ENCODE measurements at regions of chr4 and their contacts with region 1.

Region 1: DNA sequence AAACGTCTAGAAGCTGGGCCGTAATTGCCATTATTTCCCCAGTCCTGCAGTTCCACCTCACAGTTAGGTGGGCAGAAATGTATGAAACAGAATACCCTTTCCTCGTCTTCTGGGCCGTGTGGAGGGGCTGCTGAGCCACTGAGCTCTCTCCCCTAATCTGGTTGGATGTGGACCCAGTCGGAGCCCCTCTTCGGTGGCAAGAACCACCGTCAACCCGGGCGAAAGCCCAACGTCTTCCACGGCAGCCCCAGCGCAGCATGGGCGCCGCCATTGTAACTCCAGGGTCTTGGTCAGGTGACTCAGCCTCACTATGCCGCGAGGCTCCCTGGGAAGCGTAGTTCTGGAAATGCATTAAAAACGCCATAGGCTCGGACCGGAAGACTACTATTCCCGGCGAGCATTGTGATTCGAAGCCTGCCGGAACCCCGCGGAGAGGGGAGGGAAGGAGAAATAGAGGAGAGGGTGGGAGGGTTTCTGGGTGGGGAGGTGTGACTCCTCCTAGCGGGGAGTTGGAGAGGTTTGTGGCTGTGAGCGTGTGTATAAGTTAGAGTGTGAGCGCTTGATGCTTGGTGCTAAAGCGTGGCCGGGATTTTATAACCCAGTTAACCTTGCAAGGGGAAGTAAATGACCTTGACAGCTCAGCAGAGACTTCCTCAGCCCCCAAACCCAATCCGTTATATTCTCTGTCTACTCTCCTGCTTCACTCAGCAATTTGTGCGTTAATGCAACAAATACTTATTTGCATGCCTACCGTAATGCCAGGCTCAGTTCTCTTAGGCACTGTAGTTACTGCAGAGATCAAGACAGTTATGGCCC is at the start of gene GATB:
- DNase-seq: peak; percentile 75 to 97
- H3K4me3 ChIP-seq: peak within 1 kb of the TSS; percentile 63 to 74
- H3K27ac ChIP-seq: peak within 1 kb of the TSS in 1 of 2 donors; percentile 29
- H3K4me1 ChIP-seq: peaks cover 0 to 4% of the 10 kb centered on the region in 2 donors
- H3K27me3 ChIP-seq: no peaks in the 10 kb centered on the region
- CTCF ChIP-seq: peak in 2 of 3 experiments; percentile 30 to 37
- total RNA-seq, gene GATB: 16.7 TPM

Region 2: DNA sequence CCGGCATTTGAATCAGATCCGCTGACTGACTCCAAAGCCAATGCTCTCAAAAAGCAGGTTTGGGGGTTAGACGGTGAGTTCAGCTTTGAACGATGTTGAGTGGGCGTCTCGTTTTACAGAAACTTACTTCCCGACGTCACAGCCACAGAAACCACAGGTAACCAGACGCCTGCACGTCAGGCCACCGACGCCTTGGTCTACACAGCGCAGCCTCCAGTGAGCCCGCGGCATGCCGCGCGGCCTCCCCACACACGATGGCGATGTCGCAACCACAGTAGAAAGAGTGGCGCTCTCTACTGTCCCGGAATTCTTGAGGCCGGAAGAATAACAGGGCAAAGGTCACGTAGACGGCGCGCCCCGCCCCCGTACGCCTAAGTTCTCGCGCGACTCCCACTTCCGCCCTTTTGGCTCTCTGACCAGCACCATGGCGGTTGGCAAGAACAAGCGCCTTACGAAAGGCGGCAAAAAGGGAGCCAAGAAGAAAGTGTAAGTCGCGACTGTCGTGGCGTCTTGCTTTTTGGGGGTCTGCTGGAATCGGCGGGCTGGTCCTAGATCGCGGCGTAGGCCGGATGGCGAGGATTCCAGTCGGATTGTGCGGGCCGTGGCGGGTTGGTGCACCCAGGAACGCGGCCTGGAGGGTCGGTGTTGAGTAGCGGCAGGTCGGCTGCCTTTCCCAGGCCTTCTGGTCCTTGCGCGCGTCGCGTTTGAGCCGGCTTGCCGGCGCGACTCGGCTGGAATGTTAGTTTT is 661.5 kb before region 1 on chr4 and contains the start of gene RPS3A:
- intact Hi-C with region 1: loop called (anchors 2 kb)
- DNase-seq: peak; percentile 90 to 98
- H3K4me3 ChIP-seq: peak within 1 kb of the TSS; percentile 73
- H3K27ac ChIP-seq: peak within 1 kb of the TSS; percentile 90 to 93
- H3K4me1 ChIP-seq: peaks cover 6 to 18% of the 10 kb centered on the region in 2 donors
- H3K27me3 ChIP-seq: no peaks in the 10 kb centered on the region
- CTCF ChIP-seq: peak; percentile 82 to 87 (median 84)
- total RNA-seq, gene RPS3A: 1,276 TPM

Region 3: GRCh38 chr4:151227731-151228130 is 533.2 kb before region 1 on chr4:
- intact Hi-C with region 1: loop called (anchors 5 kb)
- DNase-seq: peak; percentile 18 to 84
- H3K4me3 ChIP-seq: peak overlapping the region; percentile 44 to 56
- H3K27ac ChIP-seq: peak overlapping the region; percentile 85
- H3K4me1 ChIP-seq: peaks cover 0 to 10% of the 10 kb centered on the region in 2 donors
- H3K27me3 ChIP-seq: no peaks in the 10 kb centered on the region
- CTCF ChIP-seq: no peak

Region 4: GRCh38 chr4:151408630-151409469 is 352.1 kb before region 1 on chr4 and contains the start of gene FHIP1A:
- intact Hi-C with region 1: loop called (anchors 1 kb)
- DNase-seq: peak; percentile 10 to 85
- H3K4me3 ChIP-seq: peak within 1 kb of the TSS; percentile 72 to 78
- H3K27ac ChIP-seq: peak within 1 kb of the TSS; percentile 42 to 43
- H3K4me1 ChIP-seq: peaks cover 0 to 5% of the 10 kb centered on the region in 2 donors
- H3K27me3 ChIP-seq: no peaks in the 10 kb centered on the region
- CTCF ChIP-seq: no peak
- total RNA-seq, gene FHIP1A: not detected

Region 5: GRCh38 chr4:151711646-151712045 is 49.3 kb before region 1 on chr4:
- intact Hi-C with region 1: no loop called
- DNase-seq: no peak
- H3K4me3 ChIP-seq: no peak overlapping the region
- H3K27ac ChIP-seq: no peak overlapping the region
- H3K4me1 ChIP-seq: no peaks in the 10 kb centered on the region
- H3K27me3 ChIP-seq: no peaks in the 10 kb centered on the region
- CTCF ChIP-seq: no peak

Region 6: DNA sequence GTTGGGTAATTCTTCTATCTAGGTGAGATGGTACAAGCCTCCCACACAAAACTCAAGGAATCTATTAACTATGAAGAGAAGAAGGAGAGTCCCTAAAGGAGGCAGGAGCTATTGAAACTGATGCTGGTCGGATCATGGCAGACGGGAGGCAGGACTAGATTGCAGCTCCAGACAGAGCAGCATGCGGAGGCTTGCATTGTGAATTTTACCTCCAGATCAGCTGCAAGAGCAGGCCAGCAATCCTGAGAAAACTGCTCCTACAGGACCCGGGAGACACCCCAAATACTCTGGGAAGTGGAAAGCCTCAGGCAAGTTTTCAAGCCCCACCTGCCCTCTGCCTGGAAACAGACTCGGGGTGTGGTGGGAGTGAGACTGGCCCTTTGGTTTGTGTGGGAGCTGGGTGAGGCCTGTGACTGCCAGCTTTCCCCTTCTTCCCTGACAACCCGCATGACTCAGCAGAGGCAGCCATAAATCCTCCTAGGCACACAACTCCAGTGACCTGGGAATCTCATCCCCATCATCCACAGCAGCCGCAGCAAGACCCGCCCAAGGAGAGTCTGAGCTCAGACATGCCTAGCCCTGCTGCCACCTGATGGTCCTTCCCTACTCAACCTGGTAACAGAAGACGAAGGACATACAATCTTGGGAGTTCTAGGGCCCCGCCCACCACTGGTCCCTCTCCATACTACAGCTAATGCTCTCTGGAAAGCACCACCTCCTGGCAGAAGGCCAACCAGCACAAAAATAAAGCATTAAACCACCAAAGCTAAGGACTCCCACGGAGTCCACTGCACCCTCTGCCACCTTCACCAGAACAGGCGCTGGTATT is 31.0 kb before region 1 on chr4:
- intact Hi-C with region 1: no loop called
- DNase-seq: no peak
- H3K4me3 ChIP-seq: no peak overlapping the region
- H3K27ac ChIP-seq: no peak overlapping the region
- H3K4me1 ChIP-seq: no peaks in the 10 kb centered on the region
- H3K27me3 ChIP-seq: no peaks in the 10 kb centered on the region
- CTCF ChIP-seq: no peak

Region 7: DNA sequence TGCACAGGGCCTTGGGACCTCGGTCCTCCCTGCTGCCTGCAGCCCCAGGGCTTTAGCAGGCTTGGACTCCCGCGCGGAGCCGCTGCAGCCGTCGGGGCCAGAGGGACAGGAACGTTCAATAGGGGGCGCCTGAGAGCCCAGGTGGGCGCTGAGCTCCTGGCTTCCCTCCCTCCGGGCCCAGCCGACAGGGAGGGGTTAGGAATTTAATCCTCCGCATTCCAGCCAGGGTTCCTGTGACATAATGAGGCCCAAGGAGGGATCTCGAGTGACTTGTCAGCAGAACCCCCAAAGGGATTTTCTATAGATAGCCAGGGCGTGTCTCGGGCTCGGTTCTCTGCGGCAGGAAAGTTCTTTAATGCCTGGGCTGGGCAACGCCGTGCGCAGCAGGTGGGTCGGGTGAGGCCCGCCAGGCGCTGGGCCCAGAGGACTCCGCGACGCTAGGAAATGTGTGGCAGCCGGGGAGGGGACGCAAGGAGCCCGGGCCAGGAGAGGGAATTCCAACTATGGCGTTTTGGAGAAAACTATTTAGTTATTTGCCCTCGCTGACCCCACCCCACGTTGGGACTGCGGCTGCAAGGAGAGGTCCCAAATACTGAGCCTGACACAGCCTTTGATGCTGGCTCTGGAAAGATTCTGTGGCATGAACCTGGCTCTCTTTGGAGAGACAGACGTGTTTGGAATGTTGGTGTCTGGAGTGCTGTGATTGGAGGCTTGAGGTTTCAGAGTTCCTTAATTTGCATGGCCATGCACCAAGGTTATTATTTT is 285.1 kb after region 1 on chr4:
- intact Hi-C with region 1: loop called (anchors 5 kb)
- DNase-seq: no peak
- H3K4me3 ChIP-seq: peak overlapping the region in 1 of 2 donors; percentile 39
- H3K27ac ChIP-seq: no peak overlapping the region
- H3K4me1 ChIP-seq: peaks cover 0 to 5% of the 10 kb centered on the region in 2 donors
- H3K27me3 ChIP-seq: no peaks in the 10 kb centered on the region
- CTCF ChIP-seq: peak; percentile 22 to 52 (median 43)

Region 8: GRCh38 chr4:152352622-152353116 is 591.7 kb after region 1 on chr4:
- intact Hi-C with region 1: loop called (anchors 10 kb)
- DNase-seq: peak in 1 of 2 donors; percentile 75
- H3K4me3 ChIP-seq: peak overlapping the region; percentile 59 to 65
- H3K27ac ChIP-seq: peak overlapping the region; percentile 45 to 64
- H3K4me1 ChIP-seq: peaks cover 0 to 10% of the 10 kb centered on the region in 2 donors
- H3K27me3 ChIP-seq: no peaks in the 10 kb centered on the region
- CTCF ChIP-seq: no peak

Region 9: GRCh38 chr4:152535903-152536544 is 775.1 kb after region 1 on chr4 and contains the start of gene FBXW7:
- intact Hi-C with region 1: loop called (anchors 2 kb)
- DNase-seq: peak; percentile 97 to 100
- H3K4me3 ChIP-seq: peak within 1 kb of the TSS; percentile 58 to 97
- H3K27ac ChIP-seq: peak within 1 kb of the TSS; percentile 92 to 94
- H3K4me1 ChIP-seq: peaks cover 0 to 28% of the 10 kb centered on the region in 2 donors
- H3K27me3 ChIP-seq: no peaks in the 10 kb centered on the region
- CTCF ChIP-seq: no peak
- total RNA-seq, gene FBXW7: 128 TPM